ENCODE measurements at regions of chr4 and their contacts with region 1.

Region 1: DNA sequence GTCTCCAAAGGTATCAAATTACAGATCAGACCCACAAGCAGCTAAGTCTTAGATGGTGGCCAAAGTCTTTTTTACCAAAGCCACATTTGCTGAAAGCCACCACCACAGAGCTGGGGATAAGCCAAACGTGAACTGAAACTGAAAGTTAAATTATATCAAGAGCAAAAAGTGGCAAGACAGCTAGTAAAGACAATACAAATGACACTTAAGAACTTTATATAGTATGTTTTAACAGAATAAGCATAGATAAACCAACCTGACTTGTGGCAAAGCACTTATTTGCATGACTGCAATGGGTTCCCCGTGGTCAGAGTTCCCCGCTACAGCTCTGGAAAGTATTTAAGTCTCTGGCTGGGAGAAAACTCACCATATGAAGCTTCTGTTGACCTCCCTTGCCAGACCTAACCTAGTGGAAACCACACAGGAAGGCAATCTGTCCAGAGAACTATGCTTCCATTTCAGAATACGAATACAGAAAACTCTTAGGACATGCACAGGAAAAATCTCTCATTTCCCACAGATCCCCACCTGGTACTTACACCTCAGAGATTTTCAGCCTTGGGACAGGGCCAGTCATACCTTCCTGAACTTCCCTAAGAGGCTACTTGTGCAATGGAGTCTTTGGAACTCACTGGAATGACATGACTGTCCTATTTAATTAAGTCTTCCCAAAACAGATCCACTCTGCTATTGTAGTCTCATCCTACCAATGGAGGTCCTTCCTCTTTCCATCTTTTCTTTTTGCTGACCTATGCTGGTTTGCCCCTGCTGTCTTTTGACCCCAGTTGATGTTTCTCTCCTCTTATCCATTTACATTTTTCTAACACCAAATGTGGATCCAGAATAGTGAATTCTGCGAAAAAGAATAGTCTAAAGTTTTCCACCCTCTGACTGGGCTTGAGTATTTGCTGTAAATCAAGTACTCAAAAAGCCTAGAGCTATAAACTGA is 225.1 kb downstream of the NR3C2 start:
- DNase-seq: no peak
- H3K4me3 ChIP-seq: peak overlapping the region; percentile 10 to 50 (median 24)
- H3K27ac ChIP-seq: peak overlapping the region in 1 of 2 donors; percentile 49
- H3K4me1 ChIP-seq: peaks cover 0 to 8% of the 10 kb centered on the region in 2 donors
- H3K27me3 ChIP-seq: no peaks in the 10 kb centered on the region
- CTCF ChIP-seq: no peak
- POLR2A ChIP-seq: no peak

Region 2: DNA sequence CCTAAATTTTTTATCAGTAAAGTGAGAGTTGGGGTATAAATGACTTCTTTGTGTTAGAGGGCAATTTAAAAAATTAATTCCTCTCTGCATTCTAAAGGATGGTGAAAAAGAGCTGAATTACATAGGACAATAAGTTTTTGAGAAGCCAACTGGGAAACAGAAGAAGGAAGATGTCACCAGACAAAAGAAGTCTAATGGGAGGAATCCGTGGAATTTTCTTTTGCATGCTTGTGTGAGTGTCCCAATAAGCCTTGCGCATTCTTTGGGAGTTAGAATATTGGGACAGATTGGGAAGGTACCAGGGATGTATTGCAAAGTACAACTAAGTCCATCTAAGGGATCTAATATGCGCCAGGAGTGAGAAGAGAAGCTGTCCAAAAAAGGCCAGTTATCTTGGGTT is 260.1 kb after region 1 on chr4:
- intact Hi-C with region 1: loop called (anchors 5 kb)
- DNase-seq: no peak
- H3K4me3 ChIP-seq: no peak overlapping the region
- H3K27ac ChIP-seq: no peak overlapping the region
- H3K4me1 ChIP-seq: no peaks in the 10 kb centered on the region
- H3K27me3 ChIP-seq: no peaks in the 10 kb centered on the region
- CTCF ChIP-seq: no peak
- POLR2A ChIP-seq: no peak